Activated naive CD4-positive, alpha-beta T cell treated with anti-CD3 and anti-CD28 coated beads for 36 hours (primary cell): ENCODE measurements at regions of chr2 and their contacts with region 1.

Region 1: GRCh38 chr2:30711646-30712085 is 95.6 kb downstream of the CAPN13 start:
- DNase-seq: peak; percentile 95
- H3K4me3 Mint-ChIP-seq: no peak overlapping the region
- H3K27ac Mint-ChIP-seq: no peak overlapping the region
- H3K4me1 Mint-ChIP-seq: peaks cover 4% of the 10 kb centered on the region
- H3K27me3 Mint-ChIP-seq: no peaks in the 10 kb centered on the region

Region 2: GRCh38 chr2:30089171-30089570 is 622.5 kb before region 1 on chr2:
- CTCF ChIA-PET with region 1: interaction called, 16 read pairs
- intact Hi-C with region 1: loop called (anchors 2 kb)
- DNase-seq: no peak
- H3K4me3 Mint-ChIP-seq: no peak overlapping the region
- H3K27ac Mint-ChIP-seq: no peak overlapping the region
- H3K4me1 Mint-ChIP-seq: no peaks in the 10 kb centered on the region
- H3K27me3 Mint-ChIP-seq: peaks cover 20% of the 10 kb centered on the region

Region 3: DNA sequence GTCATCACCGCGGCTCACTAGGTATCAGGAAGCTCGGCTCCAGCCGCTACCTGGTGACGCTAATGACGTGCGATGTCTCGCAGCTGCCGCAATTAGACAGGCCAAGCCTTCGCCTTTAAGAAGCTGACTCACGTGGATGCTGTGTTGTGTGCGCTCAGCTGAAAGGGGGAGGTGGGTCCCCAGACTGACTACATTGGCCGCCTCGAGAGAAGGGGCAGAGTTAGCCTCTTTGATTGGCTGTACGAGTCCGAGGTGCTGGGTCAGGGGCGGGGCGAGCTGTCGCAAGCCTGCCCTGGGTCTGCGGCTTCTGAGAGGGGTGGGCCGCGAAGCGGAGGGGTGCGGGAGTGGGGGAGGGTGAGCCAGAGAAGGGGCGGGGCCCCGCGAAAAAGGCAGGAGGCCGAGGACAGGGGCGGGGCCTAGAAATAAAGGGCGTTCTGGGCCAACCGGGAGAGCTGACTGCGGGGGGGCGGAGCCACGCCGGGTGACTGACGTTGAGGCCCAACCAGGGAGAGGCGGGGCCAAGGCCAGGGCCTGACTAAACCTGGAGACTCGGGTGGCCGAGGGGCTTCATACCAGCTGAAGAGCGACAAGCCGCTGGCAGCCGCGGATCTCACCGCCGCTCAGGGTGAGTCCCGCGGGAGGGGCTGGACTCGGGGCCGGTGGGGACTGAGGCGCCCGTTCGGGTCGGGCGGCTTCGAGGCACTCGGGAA is 565.1 kb before region 1 on chr2 and contains the start of gene YPEL5:
- CTCF ChIA-PET with region 1: interaction called, 32 read pairs
- intact Hi-C with region 1: no loop called
- DNase-seq: peak; percentile 99
- H3K4me3 Mint-ChIP-seq: peak within 1 kb of the TSS; percentile 84
- H3K27ac Mint-ChIP-seq: peak within 1 kb of the TSS; percentile 95
- H3K4me1 Mint-ChIP-seq: peaks cover 56% of the 10 kb centered on the region
- H3K27me3 Mint-ChIP-seq: no peaks in the 10 kb centered on the region
- total RNA-seq, gene YPEL5: 28.4 to 33.3 TPM

Region 4: DNA sequence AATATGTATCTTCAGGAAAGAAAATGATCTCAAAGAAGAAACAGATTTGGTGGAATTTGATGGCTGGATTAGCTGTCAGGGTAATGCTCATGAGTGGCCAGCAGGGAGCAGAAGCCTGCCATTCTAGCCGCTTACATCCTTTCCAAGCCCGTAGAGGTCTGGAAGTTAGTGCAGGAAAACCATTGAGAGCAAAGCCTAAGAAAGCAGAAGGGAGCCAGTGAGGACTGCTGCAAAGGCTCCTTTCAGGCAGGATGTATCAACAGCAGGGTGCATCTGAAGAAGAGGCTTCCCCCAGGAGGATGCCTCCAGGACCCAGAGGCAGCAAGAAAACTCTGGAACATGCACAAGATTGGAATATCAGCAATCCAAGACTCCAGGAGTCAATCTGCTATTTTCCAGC is 503.2 kb before region 1 on chr2:
- CTCF ChIA-PET with region 1: interaction called, 228 read pairs
- intact Hi-C with region 1: loop called (anchors 1 kb)
- DNase-seq: peak; percentile 51
- H3K4me3 Mint-ChIP-seq: no peak overlapping the region
- H3K27ac Mint-ChIP-seq: no peak overlapping the region
- H3K4me1 Mint-ChIP-seq: peaks cover 15% of the 10 kb centered on the region
- H3K27me3 Mint-ChIP-seq: no peaks in the 10 kb centered on the region

Region 5: DNA sequence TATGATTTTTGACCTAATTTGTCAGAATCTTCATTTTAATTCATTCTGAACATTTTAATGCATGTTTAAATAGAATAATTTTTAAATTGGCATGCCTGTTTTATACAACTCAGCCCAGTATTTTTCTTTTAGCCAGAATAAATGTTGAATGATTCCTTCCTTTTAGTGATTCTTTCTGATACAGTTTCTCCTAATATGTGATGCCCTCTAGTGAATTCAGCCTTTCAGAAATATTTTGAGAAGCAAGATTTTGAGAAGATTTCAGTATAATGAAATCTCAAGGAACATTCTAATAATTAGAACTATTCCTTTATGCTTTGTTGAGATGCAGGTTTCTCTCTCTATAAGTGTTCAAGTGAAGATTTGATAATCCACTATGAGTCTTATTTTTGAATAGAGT is 236.1 kb before region 1 on chr2:
- CTCF ChIA-PET with region 1: interaction called, 12 read pairs
- intact Hi-C with region 1: no loop called
- DNase-seq: no peak
- H3K4me3 Mint-ChIP-seq: no peak overlapping the region
- H3K27ac Mint-ChIP-seq: no peak overlapping the region
- H3K4me1 Mint-ChIP-seq: peaks cover 33% of the 10 kb centered on the region
- H3K27me3 Mint-ChIP-seq: no peaks in the 10 kb centered on the region

Region 6: GRCh38 chr2:30686000-30686399 is 25.7 kb before region 1 on chr2:
- CTCF ChIA-PET with region 1: interaction called, 118 read pairs
- intact Hi-C with region 1: no loop called
- DNase-seq: no peak
- H3K4me3 Mint-ChIP-seq: no peak overlapping the region
- H3K27ac Mint-ChIP-seq: no peak overlapping the region
- H3K4me1 Mint-ChIP-seq: no peaks in the 10 kb centered on the region
- H3K27me3 Mint-ChIP-seq: no peaks in the 10 kb centered on the region

Region 7: DNA sequence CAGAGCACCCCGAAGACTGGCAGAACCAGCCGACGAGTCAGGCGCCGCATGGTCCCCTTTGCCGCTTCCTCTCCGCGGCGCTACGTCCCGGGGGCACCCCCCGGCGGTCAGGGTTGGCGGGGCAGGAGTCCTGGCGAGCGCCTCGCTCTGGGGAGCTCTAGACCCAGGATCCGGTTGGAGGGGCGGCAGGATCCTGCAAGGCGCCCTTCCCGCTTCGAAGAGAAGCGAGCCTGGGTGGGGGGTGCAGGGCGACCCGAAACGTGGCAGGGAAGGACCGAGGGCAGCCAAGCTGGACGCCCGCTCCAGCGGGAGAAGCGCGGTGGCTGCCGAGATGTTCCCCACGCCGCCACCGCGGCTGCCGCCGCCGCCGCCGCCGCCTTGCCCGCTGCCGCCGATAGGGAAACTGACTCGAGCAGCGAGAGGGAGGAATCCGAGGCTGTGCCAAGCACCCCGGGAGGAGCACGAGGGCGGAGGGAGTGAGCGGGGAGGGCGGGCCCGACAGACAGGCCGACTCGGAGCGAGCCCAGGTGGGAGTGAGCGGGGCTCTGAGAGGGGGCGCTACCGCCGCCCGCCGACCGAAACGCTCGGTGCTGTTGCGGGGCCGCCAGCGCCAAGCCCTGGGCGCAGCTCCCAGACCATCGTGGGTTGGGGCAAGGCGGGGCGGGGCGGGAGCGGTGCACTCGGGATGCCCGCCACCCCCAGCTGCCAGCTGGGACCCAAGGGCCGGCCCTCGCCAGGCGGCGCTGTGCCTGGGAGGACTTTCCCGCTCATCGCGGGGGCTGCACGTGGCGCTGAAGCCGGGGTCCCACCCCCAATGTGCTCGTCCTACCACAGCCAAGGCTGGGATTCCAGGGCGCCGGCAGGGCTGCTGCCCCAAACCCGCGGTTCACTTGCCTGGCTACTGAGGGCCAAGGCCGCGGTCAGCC is 426.6 kb after region 1 on chr2 and contains the start of gene GALNT14:
- CTCF ChIA-PET with region 1: interaction called, 4 read pairs
- intact Hi-C with region 1: loop called (anchors 10 kb)
- DNase-seq: peak; percentile 68
- H3K4me3 Mint-ChIP-seq: peak within 1 kb of the TSS; percentile 68
- H3K27ac Mint-ChIP-seq: no peak within 1 kb of the TSS
- H3K4me1 Mint-ChIP-seq: peaks cover 6% of the 10 kb centered on the region
- H3K27me3 Mint-ChIP-seq: peaks cover 51% of the 10 kb centered on the region
- total RNA-seq, gene GALNT14: 1.1 to 1.5 TPM